ENCODE measurements at regions of chr19 and their contacts with region 1.

Region 1: GRCh38 chr19:40139533-40140287 is 49.0 kb upstream of the ZNF780A start:
- DNase-seq: peak; percentile 12
- ATAC-seq: no peak
- H3K4me3 Mint-ChIP-seq: no peak overlapping the region
- H3K27ac Mint-ChIP-seq: no peak overlapping the region
- H3K4me1 Mint-ChIP-seq: peaks cover 16% of the 10 kb centered on the region
- H3K27me3 Mint-ChIP-seq: no peaks in the 10 kb centered on the region
- CTCF ChIP-seq: peak; percentile 89

Region 2: DNA sequence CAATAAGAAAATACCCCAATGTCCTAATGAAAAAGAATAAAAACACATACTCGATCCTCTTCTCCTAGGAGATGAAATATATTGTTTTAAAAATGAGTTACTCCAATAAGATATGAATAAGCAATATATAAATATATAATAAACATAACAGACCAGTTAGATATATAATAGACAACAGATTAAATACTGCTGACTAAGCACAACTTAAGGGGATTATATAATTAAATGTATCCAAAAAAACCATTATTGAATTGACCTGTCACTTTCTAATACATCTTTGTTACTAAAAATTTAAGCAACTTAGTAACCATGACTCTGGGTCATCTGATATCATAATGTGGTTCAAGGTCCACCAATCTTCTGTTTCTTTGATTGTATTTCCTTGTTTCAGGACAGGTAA is 69.7 kb before region 1 on chr19:
- CTCF ChIA-PET with region 1: no interaction called
- POLR2A ChIA-PET with region 1: no interaction called
- intact Hi-C with region 1: no loop called
- DNase-seq: no peak
- ATAC-seq: no peak
- H3K4me3 Mint-ChIP-seq: no peak overlapping the region
- H3K27ac Mint-ChIP-seq: no peak overlapping the region
- H3K4me1 Mint-ChIP-seq: no peaks in the 10 kb centered on the region
- H3K27me3 Mint-ChIP-seq: no peaks in the 10 kb centered on the region
- CTCF ChIP-seq: no peak

Region 3: DNA sequence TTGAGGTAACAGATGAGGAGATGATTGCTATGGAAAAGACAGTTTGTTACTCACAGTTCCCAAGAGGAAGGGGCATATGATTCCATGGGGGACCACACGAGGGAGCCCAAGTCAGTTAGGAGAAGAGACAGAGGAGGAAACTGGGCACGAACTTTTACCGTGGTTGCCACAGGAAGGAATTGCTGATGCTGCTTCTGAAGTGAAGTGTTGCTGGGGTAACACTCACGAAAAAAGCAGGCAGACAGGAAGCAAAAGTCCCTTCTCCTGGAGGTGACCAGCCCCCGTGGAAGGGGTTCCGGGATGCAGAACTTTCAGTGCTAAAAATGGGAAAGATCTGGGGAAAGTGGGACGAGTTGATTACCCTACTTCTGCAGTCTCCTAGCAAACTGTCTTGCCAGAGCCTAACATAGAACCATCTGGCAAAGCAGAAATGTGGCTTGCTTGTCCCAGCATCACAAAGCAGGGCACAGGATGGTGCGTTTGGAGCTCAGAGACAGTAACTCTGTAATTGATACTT is 16.1 kb after region 1 on chr19:
- CTCF ChIA-PET with region 1: interaction called, 16 read pairs
- POLR2A ChIA-PET with region 1: interaction called, 3 read pairs
- intact Hi-C with region 1: no loop called
- DNase-seq: no peak
- ATAC-seq: no peak
- H3K4me3 Mint-ChIP-seq: no peak overlapping the region
- H3K27ac Mint-ChIP-seq: no peak overlapping the region
- H3K4me1 Mint-ChIP-seq: peaks cover 5% of the 10 kb centered on the region
- H3K27me3 Mint-ChIP-seq: no peaks in the 10 kb centered on the region
- CTCF ChIP-seq: no peak

Region 4: GRCh38 chr19:40221858-40222837 is 82.4 kb after region 1 on chr19:
- CTCF ChIA-PET with region 1: interaction called, 17 read pairs
- POLR2A ChIA-PET with region 1: interaction called, 3 read pairs
- intact Hi-C with region 1: loop called (anchors 5 kb)
- DNase-seq: peak; percentile 81
- ATAC-seq: peak; percentile 75
- H3K4me3 Mint-ChIP-seq: no peak overlapping the region
- H3K27ac Mint-ChIP-seq: no peak overlapping the region
- H3K4me1 Mint-ChIP-seq: peaks cover 20% of the 10 kb centered on the region
- H3K27me3 Mint-ChIP-seq: peaks cover 58% of the 10 kb centered on the region
- CTCF ChIP-seq: peak; percentile 95

Measured in activated CD8-positive, alpha-beta T cell treated with anti-CD3 and anti-CD28 coated beads for 36 hours (primary cell).